Activated CD8-positive, alpha-beta T cell treated with anti-CD3 and anti-CD28 coated beads for 36 hours (primary cell): ENCODE measurements at regions of chr5 and their contacts with region 1.

Region 1: GRCh38 chr5:176537608-176538504 is 654 bp upstream of the RNF44 start:
- DNase-seq: peak; percentile 99
- ATAC-seq: peak; percentile 70
- H3K4me3 Mint-ChIP-seq: peak overlapping the region; percentile 86
- H3K27ac Mint-ChIP-seq: peak overlapping the region; percentile 98
- H3K4me1 Mint-ChIP-seq: peaks cover 68% of the 10 kb centered on the region
- H3K27me3 Mint-ChIP-seq: no peaks in the 10 kb centered on the region
- CTCF ChIP-seq: no peak

Region 2: GRCh38 chr5:176388444-176389134 is 149.3 kb before region 1 on chr5 and contains the starts of genes HIGD2A and NOP16:
- CTCF ChIA-PET with region 1: no interaction called
- POLR2A ChIA-PET with region 1: interaction called, 9 read pairs
- intact Hi-C with region 1: loop called (anchors 1 kb)
- DNase-seq: peak; percentile 100
- ATAC-seq: peak; percentile 92
- H3K4me3 Mint-ChIP-seq: peak within 1 kb of the TSS; percentile 98
- H3K27ac Mint-ChIP-seq: peak within 1 kb of the TSS; percentile 99
- H3K4me1 Mint-ChIP-seq: peaks cover 29% of the 10 kb centered on the region
- H3K27me3 Mint-ChIP-seq: no peaks in the 10 kb centered on the region
- CTCF ChIP-seq: no peak
- total RNA-seq, gene HIGD2A: 118 to 120 TPM
- total RNA-seq, gene NOP16: 71.8 to 75.1 TPM

Region 3: DNA sequence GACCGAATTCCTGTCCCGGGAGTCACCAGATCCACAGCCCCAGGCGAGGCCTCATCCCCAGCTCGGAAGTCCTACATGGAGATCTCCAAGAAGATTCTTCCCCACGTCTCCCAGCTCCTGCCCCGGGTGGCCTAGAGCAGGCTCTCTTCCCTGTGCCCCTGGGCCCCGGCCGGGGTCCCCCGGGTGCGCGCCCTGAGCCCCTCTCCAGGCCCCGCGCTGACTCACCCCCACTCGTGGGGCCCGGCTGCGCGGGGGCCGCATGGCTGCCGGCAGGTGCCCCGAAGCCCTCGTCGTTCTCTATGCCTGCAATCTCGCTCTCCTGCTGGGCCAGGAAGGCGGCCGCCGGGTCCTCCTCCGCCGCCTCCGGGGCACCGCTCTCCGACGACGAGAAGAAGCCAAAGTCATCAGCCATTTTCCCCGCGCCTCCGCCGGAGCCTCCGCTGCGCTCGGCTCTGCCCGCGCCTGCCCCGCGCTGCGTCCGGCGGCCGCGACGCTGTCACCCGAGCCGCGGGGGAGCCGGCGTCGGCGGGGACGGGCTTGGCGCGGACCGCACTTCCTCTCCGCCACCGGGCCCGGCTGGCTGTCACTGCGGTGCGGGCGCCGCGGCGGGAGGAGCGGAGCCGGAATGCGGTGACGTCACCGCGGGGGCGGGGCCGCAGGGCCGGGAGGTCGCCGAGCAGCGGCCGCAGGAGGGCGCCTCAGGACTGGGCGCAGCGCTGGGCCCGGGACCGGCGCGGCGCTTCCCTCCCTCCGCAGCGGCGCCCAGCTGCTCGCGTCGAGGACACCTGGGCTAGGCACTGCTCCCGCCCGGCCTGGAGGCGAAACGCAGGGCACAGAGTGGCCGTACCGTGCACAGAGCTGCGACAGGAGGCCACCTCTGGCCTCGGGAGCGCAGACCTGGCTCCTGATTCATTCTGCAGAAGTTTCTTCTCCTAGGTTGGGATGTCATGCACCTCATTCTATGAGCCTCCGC is 121.6 kb before region 1 on chr5 and contains the start of gene CLTB:
- CTCF ChIA-PET with region 1: interaction called, 8 read pairs
- POLR2A ChIA-PET with region 1: interaction called, 21 read pairs
- intact Hi-C with region 1: no loop called
- DNase-seq: peak; percentile 89
- ATAC-seq: peak; percentile 96
- H3K4me3 Mint-ChIP-seq: peak within 1 kb of the TSS; percentile 77
- H3K27ac Mint-ChIP-seq: peak within 1 kb of the TSS; percentile 72
- H3K4me1 Mint-ChIP-seq: peaks cover 40% of the 10 kb centered on the region
- H3K27me3 Mint-ChIP-seq: no peaks in the 10 kb centered on the region
- CTCF ChIP-seq: peak; percentile 71
- total RNA-seq, gene CLTB: 48.2 to 48.6 TPM

Region 4: DNA sequence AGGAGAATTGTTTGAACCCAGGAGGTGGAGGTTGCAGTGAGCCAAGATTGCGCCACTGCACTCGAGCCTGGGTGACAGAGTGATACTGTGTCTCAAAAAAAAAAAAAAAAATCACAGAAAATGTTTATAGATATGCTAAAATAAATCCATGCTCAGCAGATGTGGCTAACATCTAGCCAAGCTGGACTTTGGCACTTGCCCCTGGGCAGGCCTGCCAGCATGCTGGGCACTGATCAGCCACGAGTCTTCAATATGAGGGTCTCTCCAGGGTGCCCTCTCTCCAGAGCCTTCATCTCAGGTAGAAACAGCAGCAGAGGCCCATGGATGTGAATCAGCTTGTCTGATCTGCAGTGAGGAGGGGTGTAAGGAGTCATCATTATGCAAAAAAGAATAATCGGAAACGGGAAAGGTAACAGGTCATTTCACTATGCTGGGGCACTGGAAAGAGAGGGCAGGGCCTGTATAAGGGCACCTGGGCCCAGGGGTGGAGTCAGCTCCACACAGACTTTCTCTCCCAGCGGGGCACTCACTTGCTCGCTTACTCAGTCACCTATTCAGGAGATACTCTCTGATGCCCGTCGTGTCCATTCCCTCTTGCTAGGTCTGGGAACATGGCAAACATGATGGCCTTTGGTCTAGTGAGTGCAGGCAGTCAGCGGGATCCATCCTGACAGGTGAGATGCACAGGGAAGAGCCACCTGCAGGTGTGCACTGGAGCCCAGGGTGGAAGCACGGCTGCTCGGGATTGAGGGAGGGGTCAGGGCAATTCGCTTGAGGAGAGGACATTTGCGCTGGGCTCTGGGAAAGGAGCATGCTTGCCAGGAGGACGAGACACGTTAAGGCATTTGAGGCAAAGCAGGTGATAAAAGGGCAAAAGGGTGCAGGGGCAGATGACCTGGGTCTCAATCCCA is 17.8 kb before region 1 on chr5:
- CTCF ChIA-PET with region 1: interaction called, 4 read pairs
- POLR2A ChIA-PET with region 1: interaction called, 20 read pairs
- intact Hi-C with region 1: no loop called
- DNase-seq: no peak
- ATAC-seq: no peak
- H3K4me3 Mint-ChIP-seq: no peak overlapping the region
- H3K27ac Mint-ChIP-seq: no peak overlapping the region
- H3K4me1 Mint-ChIP-seq: peaks cover 11% of the 10 kb centered on the region
- H3K27me3 Mint-ChIP-seq: no peaks in the 10 kb centered on the region
- CTCF ChIP-seq: no peak